ENCODE measurements at regions of chr5 and their contacts with region 1.

Region 1: DNA sequence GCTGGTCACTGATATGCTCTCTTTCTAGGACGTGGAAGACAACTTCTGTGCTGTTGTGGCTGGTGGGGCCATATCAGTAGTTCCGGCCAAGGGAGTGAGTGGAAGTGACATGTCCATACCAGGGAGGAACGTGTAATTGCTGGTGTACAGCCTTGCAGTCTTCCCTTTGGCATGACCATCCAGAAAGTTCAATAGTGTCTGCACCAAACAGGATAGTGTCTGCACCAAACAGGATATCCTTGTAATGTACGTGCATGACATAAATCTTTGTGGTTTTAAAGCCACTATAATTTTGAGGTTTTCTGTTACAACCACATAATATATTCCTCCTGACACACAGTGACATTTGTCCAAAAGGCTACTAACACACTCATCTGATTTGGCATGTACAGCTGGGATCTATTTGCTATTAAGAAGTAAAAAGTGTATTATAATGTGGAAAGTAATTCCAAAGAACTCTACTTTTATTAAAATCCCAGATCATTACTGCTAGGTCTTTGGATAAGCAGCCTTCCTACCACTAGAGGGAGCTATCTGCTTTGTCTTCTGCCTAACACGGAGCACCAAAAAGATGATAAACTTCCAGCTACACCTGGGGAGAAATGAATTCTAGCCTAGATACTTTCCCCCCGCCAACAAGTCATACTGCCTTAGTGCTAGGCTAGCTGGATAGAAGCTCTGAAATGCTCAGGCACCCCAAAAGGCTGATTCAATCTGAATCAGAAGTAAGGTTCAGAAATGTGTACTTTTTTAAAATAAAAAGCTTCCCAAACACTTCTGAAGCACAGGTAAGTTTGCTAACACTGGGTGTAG is 52.7 kb downstream of the RNF145 start:
- DNase-seq: peak; percentile 71 to 80 (median 72)
- ATAC-seq: peak; percentile 97
- H3K4me3 ChIP-seq: no peak overlapping the region
- H3K27ac ChIP-seq: no peak overlapping the region
- H3K4me1 ChIP-seq: no peaks in the 10 kb centered on the region
- H3K27me3 ChIP-seq: no peaks in the 10 kb centered on the region
- CTCF ChIP-seq: peak; percentile 66 to 87 (median 76); a peak in 5 of 6 replicates
- EP300 ChIP-seq: no peak
- POLR2A ChIP-seq: no peak
- RAD21 ChIP-seq: peak; percentile 86 to 91

Region 2: DNA sequence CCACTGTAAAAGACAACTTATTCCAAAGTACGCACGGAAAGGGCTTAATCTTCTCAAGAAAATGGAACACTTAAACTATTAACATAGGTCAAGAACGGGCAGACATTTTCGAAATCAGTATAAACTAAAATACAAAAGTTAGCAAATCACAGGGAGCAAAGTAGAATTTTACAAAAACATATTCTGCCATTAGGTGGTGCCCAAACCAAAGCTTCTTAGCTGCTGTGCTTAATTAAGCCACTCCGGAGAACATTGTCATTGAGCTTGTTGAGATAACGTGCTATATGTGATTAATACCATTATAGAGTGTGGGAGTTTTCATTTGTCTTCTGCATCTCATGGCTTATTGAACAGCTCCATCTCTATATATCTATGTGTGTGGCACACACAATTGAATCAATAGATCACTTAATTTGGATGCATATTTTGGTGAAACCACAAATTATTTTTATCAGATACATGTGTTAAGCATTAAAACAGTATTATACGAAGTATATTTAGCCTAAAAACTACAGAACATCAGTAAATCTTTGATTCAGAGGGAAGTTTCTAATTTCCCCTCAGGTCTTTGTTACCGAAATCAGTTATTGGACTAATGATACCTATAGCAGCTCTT is 129.9 kb after region 1 on chr5:
- CTCF ChIA-PET with region 1: no interaction called
- POLR2A ChIA-PET with region 1: no interaction called
- in situ Hi-C with region 1: no loop called
- intact Hi-C with region 1: loop called (anchors 2 kb)
- DNase-seq: peak in 1 of 4 experiments; percentile 40
- ATAC-seq: peak; percentile 84
- H3K4me3 ChIP-seq: no peak overlapping the region
- H3K27ac ChIP-seq: no peak overlapping the region
- H3K4me1 ChIP-seq: no peaks in the 10 kb centered on the region
- H3K27me3 ChIP-seq: no peaks in the 10 kb centered on the region
- CTCF ChIP-seq: peak; percentile 11 to 64 (median 46); a peak in 4 of 6 replicates
- EP300 ChIP-seq: no peak
- POLR2A ChIP-seq: no peak
- RAD21 ChIP-seq: peak; percentile 74 to 75

Region 3: DNA sequence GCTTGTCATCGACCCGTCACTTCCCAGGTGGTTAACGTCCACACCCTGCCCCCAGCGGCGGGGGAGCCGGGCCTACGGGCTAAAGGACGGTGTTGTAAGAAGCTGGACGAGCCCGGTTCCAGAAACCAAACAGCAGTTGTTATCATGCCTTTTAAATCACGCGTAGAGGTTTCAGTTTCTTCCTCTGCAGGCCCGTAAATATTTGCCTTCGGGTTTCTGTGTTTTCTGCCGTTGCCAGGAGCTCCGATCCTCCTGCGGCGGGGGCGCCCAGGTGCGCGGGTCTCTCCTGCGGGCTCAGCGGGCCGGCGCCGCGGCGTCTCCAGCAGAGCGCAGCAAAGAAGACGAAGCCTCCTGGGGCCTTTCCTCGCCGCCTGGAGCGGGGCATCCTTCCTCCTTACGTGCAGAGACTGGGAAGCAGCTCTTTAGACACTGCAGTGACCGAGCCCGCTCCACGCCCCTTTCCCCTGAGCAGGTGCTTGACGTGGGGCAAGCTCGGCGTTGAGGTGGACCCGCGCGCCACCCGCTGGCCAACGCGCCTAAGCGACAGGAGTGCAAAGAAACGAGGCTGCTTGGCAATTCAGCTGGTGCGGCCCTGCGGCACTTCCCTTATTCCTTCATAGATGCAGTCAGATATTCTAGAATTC is 830.5 kb after region 1 on chr5:
- CTCF ChIA-PET with region 1: no interaction called
- POLR2A ChIA-PET with region 1: no interaction called
- in situ Hi-C with region 1: loop called (anchors 25 kb)
- intact Hi-C with region 1: no loop called
- DNase-seq: peak; percentile 63 to 70 (median 67)
- ATAC-seq: peak; percentile 99
- H3K4me3 ChIP-seq: no peak overlapping the region
- H3K27ac ChIP-seq: no peak overlapping the region
- H3K4me1 ChIP-seq: peaks cover 0 to 8% of the 10 kb centered on the region in 2 experiments; a peak in 2 of 5 replicates
- H3K27me3 ChIP-seq: peaks cover 10 to 43% of the 10 kb centered on the region in 2 experiments; a peak in 4 of 5 replicates
- CTCF ChIP-seq: peak; percentile 62 to 74 (median 66); a peak in 5 of 6 replicates
- EP300 ChIP-seq: no peak
- POLR2A ChIP-seq: no peak
- RAD21 ChIP-seq: peak; percentile 63 to 81

Measured in K562 (cell line).